ENCODE measurements at regions of chr4 and their contacts with region 1.

Region 1: GRCh38 chr4:40316782-40317635 is 18.1 kb upstream of the CHRNA9 start:
- DNase-seq: peak; percentile 72
- H3K4me3 Mint-ChIP-seq: peak overlapping the region; percentile 65
- H3K27ac Mint-ChIP-seq: peak overlapping the region; percentile 81
- H3K4me1 Mint-ChIP-seq: peaks cover 35% of the 10 kb centered on the region
- H3K27me3 Mint-ChIP-seq: peaks cover 8% of the 10 kb centered on the region

Region 2: DNA sequence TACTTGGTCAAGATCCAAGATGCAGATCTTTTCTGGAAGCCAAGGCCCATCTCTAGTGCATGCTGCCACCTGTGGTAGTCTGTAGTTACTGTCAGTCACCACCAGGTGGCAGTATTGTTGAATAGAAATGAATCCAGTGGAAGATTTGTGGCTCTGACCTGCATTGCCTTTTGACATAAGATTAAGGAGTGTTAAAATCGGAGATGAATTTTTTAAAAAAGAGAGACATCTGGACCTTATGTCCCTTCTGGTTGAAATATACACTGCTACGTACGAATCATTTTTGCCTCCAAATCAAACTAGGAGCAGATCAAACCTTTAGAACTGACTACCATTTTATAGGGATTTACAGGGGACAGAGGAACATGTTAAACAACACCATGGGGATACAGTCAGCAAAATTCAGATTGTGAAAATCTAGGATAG is 167.0 kb before region 1 on chr4:
- CTCF ChIA-PET with region 1: interaction called, 27 read pairs
- POLR2A ChIA-PET with region 1: no interaction called
- DNase-seq: peak; percentile 71
- H3K4me3 Mint-ChIP-seq: no peak overlapping the region
- H3K27ac Mint-ChIP-seq: no peak overlapping the region
- H3K4me1 Mint-ChIP-seq: peaks cover 17% of the 10 kb centered on the region
- H3K27me3 Mint-ChIP-seq: no peaks in the 10 kb centered on the region

Region 3: GRCh38 chr4:40205259-40206198 is 111.5 kb before region 1 on chr4:
- CTCF ChIA-PET with region 1: interaction called, 11 read pairs
- POLR2A ChIA-PET with region 1: interaction called, 143 read pairs
- DNase-seq: peak; percentile 66
- H3K4me3 Mint-ChIP-seq: peak overlapping the region; percentile 97
- H3K27ac Mint-ChIP-seq: peak overlapping the region; percentile 99
- H3K4me1 Mint-ChIP-seq: peaks cover 64% of the 10 kb centered on the region
- H3K27me3 Mint-ChIP-seq: no peaks in the 10 kb centered on the region

Region 4: DNA sequence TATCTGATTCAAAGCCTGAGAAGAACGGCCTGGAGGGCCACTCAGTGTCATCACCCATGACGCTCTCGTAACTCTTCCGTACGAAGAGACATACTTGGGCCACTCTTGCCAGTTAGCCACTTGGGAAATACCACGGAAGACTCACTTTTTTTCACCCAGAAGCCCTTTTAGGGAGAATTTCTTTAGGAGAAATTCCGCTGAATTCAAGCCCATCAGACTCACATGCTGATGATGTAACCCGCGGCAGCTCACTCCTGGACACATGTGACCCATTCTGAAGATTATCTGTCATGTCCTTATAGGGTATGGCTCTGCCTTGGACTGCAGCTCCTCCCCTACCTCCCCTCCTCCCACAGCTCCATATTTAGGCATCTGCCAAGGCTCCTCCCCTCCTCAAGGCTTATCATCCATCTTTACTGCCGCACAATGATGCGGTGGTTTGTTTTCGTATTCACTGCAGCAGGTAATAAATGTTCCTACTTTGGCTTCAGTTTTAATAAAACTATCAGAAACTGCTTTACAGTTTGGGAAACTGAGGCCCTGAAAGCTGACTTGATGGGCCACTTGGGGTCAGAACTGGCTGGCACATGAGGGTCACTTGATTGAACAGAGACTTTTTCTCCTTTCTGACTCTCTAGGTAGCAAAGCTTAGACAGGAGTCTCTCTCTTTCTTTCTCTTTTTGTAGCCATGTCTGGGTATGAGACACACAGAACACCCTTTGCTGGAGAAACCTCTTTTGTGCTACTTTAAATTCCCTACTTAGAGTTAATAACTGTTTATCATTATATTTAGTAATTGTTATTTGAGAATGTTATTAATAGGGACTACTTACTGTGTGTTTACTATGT is 78.1 kb before region 1 on chr4:
- CTCF ChIA-PET with region 1: interaction called, 24 read pairs
- POLR2A ChIA-PET with region 1: interaction called, 5 read pairs
- DNase-seq: peak; percentile 87
- H3K4me3 Mint-ChIP-seq: peak overlapping the region; percentile 67
- H3K27ac Mint-ChIP-seq: peak overlapping the region; percentile 93
- H3K4me1 Mint-ChIP-seq: peaks cover 89% of the 10 kb centered on the region
- H3K27me3 Mint-ChIP-seq: no peaks in the 10 kb centered on the region

Region 5: GRCh38 chr4:40289366-40290188 is 27.4 kb before region 1 on chr4:
- CTCF ChIA-PET with region 1: interaction called, 14 read pairs
- POLR2A ChIA-PET with region 1: interaction called, 7 read pairs
- DNase-seq: no peak
- H3K4me3 Mint-ChIP-seq: peak overlapping the region; percentile 40
- H3K27ac Mint-ChIP-seq: peak overlapping the region; percentile 87
- H3K4me1 Mint-ChIP-seq: peaks cover 39% of the 10 kb centered on the region
- H3K27me3 Mint-ChIP-seq: no peaks in the 10 kb centered on the region